A549 (cell line): ENCODE measurements at regions of chr1 and their contacts with region 1.

Region 1: GRCh38 chr1:147273409-147274336 is 31.2 kb downstream of the CHD1L start:
- DNase-seq: peak; percentile 59 to 61
- ATAC-seq: peak; percentile 72 to 75
- H3K4me3 ChIP-seq: no peak overlapping the region
- H3K27ac ChIP-seq: peak overlapping the region in 1 of 2 experiments; percentile 36; a peak in 2 of 6 replicates
- H3K4me1 ChIP-seq: peaks cover 13% of the 10 kb centered on the region
- CTCF ChIP-seq: peak; percentile 60
- EP300 ChIP-seq: no peak
- POLR2A ChIP-seq: no peak
- RAD21 ChIP-seq: peak; percentile 58 to 64

Region 2: GRCh38 chr1:147142886-147143285 is 130.8 kb before region 1 on chr1:
- CTCF ChIA-PET with region 1: no interaction called
- POLR2A ChIA-PET with region 1: no interaction called
- DNase-seq: no peak
- ATAC-seq: no peak
- H3K4me3 ChIP-seq: no peak overlapping the region
- H3K27ac ChIP-seq: no peak overlapping the region
- H3K4me1 ChIP-seq: no peaks in the 10 kb centered on the region
- CTCF ChIP-seq: no peak
- EP300 ChIP-seq: no peak
- POLR2A ChIP-seq: no peak
- RAD21 ChIP-seq: no peak

Region 3: GRCh38 chr1:147287133-147287865 is 13.6 kb after region 1 on chr1:
- CTCF ChIA-PET with region 1: interaction called, 18 read pairs
- POLR2A ChIA-PET with region 1: no interaction called
- DNase-seq: no peak
- ATAC-seq: no peak
- H3K4me3 ChIP-seq: no peak overlapping the region
- H3K27ac ChIP-seq: no peak overlapping the region
- H3K4me1 ChIP-seq: no peaks in the 10 kb centered on the region
- CTCF ChIP-seq: no peak
- EP300 ChIP-seq: no peak
- POLR2A ChIP-seq: no peak
- RAD21 ChIP-seq: no peak

Region 4: DNA sequence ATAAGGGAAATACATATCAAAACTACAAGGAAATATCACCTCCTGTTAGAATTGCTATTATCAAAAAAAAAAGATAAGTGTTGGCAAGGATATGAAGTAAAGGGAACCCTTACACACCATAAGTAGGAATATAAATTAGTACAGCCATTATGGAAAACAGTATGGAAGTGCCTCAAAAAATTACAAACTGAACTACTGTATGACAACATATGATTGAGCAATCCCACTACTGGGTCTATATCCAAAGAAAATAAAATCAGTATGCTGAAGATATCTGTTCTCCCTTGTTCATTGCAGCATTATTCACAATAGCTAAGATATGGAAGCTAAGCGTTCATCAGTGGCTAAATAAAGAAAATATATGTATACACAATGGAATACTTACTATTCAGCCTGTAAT is 28.6 kb after region 1 on chr1:
- CTCF ChIA-PET with region 1: no interaction called
- POLR2A ChIA-PET with region 1: no interaction called
- DNase-seq: no peak
- ATAC-seq: no peak
- H3K4me3 ChIP-seq: no peak overlapping the region
- H3K27ac ChIP-seq: no peak overlapping the region
- H3K4me1 ChIP-seq: no peaks in the 10 kb centered on the region
- CTCF ChIP-seq: no peak
- EP300 ChIP-seq: no peak
- POLR2A ChIP-seq: no peak
- RAD21 ChIP-seq: no peak

Region 5: DNA sequence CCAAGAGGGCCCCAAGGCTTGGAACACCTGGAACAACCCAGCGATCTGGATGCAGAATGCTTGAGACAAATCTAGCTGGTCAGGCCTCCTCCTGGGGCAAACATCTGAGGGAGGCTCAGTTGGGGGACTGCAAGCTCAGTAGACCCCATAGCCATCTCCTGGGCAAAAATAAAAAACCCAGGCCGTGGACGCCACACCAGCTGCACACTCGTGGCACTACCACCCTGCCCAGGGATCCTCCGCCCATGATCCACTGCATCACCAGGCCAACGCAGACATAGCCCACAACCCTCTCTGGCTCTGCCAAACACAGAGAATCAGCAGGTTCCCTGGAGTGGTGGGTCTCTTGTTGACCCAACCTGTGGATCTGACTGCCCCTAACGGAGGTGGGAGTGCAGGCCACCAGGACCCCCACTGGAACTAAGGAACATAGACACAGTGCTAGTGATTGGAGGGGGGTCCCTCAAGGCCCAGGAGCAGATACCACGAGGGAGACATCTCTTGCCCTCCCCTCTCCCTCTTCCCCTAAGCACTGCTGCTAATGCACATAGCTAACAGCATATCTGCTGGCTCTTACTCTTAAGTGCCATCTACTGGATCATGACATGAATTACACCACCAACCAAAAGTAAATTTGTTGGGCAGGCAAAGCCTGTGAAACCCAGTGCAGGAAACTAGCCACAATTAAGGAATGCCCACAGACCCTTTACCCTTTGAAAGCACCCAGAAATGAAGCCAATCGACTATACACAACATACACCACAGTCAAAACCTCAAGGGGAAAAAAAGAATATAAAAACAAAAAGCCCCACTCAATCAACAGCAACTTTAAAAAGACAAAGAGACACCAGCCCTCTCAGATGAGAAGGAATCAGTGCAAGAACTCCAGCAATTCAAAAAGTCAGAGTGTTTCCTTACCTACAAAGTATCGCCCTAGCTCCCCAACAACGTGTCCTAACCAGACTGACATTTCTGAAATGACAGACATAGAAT is 116.2 kb after region 1 on chr1:
- CTCF ChIA-PET with region 1: interaction called, 20 read pairs
- POLR2A ChIA-PET with region 1: no interaction called
- DNase-seq: peak; percentile 28 to 45
- ATAC-seq: peak; percentile 78 to 85
- H3K4me3 ChIP-seq: no peak overlapping the region
- H3K27ac ChIP-seq: no peak overlapping the region
- H3K4me1 ChIP-seq: no peaks in the 10 kb centered on the region
- CTCF ChIP-seq: peak; percentile 53
- EP300 ChIP-seq: no peak
- POLR2A ChIP-seq: no peak
- RAD21 ChIP-seq: peak; percentile 40 to 61; a peak in 3 of 5 replicates

Region 6: GRCh38 chr1:147472966-147473734 is 199.5 kb after region 1 on chr1:
- CTCF ChIA-PET with region 1: no interaction called
- POLR2A ChIA-PET with region 1: no interaction called
- DNase-seq: no peak
- ATAC-seq: no peak
- H3K4me3 ChIP-seq: no peak overlapping the region
- H3K27ac ChIP-seq: no peak overlapping the region
- H3K4me1 ChIP-seq: no peaks in the 10 kb centered on the region
- CTCF ChIP-seq: no peak
- EP300 ChIP-seq: no peak
- POLR2A ChIP-seq: no peak
- RAD21 ChIP-seq: no peak